ENCODE measurements at regions of chr10 and their contacts with region 1.

Region 1: DNA sequence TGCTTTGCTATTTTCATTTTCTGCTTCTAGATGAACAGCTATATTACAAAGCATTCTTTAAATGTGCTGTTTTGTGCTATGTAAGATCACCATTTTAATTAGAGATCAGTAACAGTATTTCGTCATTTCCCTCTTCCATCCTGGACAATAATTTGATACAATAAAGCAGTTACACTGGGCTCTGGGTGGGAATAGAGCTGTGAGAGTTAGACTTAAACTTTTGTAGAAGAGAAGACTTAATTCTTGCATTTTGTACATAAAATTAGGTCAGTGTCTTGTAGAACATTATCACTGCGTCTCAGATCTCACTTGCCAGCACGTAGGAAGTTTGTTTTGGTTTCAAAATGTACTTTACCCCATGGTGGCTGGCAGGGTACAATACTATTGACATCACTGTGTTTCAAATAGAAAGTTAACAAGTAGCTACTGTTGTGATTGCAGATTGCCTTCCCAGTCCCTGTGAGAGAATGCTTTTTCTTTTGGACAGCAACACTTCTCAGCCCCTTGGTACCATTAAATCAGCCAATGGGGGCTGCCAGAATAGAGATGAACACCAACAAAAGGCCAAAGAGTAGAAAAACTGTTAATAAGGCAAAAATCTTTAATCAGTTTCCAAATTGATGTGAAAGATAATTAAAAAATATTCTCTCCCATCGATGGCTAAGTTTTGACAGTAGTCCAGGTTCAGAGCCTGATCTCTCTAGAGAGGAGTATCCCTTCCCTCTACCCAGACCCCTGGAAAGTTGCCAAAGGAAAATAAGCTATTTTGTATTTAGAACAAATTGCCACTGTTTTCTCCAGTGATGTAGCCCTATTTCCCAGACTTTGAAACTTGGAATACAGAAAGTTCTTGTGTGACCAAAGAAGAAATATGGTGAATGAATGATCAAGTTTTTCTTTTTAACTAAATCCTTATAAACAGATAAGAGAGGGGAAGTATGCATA is 35.1 kb downstream of the SMNDC1 start:
- DNase-seq: peak; percentile 45
- H3K4me3 ChIP-seq: no peak overlapping the region
- H3K27ac ChIP-seq: peak overlapping the region; percentile 31
- H3K4me1 ChIP-seq: peaks cover 10% of the 10 kb centered on the region
- H3K27me3 ChIP-seq: no peaks in the 10 kb centered on the region
- CTCF ChIP-seq: no peak

Region 2: GRCh38 chr10:110233846-110234245 is 35.8 kb before region 1 on chr10:
- intact Hi-C with region 1: loop called (anchors 5 kb)
- DNase-seq: no peak
- H3K4me3 ChIP-seq: no peak overlapping the region
- H3K27ac ChIP-seq: no peak overlapping the region
- H3K4me1 ChIP-seq: no peaks in the 10 kb centered on the region
- H3K27me3 ChIP-seq: no peaks in the 10 kb centered on the region
- CTCF ChIP-seq: no peak